ENCODE measurements at regions of chr1 and their contacts with region 1.

Region 1: DNA sequence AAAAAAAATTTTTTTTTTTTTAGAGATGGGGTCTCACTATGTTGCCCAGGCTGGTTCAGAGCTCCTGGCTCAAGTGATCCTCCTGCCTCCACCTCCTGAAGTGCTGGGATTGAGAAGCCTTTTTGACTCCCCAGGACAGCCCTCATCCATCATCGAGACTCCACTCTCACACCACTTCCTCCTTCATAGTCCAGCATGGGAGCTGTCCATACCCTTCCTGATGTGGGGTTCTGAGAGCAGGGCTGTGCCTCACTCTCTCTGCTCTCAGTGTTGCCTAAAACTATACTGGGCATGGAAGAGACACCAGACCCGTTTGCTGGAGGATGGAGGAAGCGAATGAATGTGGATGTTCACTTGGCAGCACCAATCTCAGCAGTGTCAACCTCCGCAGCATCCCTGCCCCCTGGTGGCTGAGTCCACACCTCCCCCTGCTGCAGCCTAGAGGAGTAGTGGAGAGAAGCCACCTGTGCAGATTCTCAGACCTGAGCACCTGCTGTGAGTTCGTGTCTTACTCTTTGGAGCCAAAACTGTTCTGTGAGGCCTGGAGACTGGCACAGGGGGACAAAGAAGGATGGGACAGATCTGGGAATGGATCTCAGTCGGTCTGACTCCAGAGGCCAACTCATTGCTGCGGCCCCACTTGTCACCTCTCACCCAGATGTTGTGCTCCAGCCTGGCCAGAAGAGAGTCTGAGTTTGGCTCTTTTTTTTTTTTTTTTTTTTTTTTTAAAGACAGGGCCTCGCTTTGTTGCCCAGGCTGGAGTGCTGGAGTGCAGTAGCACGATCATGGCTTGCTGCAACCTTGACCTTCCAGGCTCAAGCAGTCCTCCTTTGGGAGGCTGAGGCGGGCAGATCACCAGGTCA is 17.7 kb downstream of the TINAGL1 start:
- DNase-seq: peak; percentile 75 to 86 (median 83)
- H3K4me3 ChIP-seq: no peak overlapping the region
- H3K27ac ChIP-seq: no peak overlapping the region
- H3K4me1 ChIP-seq: peaks cover 18 to 45% (median 22%) of the 10 kb centered on the region in 4 experiments
- H3K27me3 ChIP-seq: peaks cover 0 to 6% (median 4%) of the 10 kb centered on the region in 5 experiments

Region 2: GRCh38 chr1:31564134-31564989 is 29.6 kb before region 1 on chr1:
- CTCF ChIA-PET with region 1: interaction called, 131 read pairs
- POLR2A ChIA-PET with region 1: no interaction called
- DNase-seq: peak; percentile 50 to 78 (median 66)
- H3K4me3 ChIP-seq: no peak overlapping the region
- H3K27ac ChIP-seq: no peak overlapping the region
- H3K4me1 ChIP-seq: no peaks in the 10 kb centered on the region
- H3K27me3 ChIP-seq: no peaks in the 10 kb centered on the region

Region 3: DNA sequence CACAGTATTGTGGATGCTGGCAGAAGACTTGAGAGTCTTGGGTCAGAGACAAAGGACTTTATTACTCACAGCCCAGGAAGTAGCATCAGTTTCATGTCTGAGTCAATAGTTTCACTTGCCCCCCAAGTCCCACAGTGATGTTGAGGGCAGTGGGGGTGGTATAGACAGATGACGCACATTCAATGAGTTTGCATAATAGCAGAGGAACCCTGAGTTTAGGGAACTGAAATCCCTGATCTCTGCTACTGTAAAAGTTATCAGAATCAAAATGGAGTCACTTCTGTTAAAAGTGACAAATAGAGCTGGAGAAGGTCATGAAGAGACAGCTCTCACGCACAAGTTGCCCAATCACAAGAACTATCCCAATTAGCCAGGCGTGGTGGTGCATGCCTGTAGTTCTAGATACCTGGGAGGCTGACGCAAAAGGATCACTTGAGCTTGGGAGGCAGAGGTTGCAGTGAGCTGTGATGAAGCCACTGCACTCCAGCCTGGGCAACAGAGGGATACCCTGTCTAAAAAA is 12.0 kb after region 1 on chr1:
- CTCF ChIA-PET with region 1: interaction called, 31 read pairs
- POLR2A ChIA-PET with region 1: no interaction called
- DNase-seq: peak; percentile 17 to 74 (median 65)
- H3K4me3 ChIP-seq: no peak overlapping the region
- H3K27ac ChIP-seq: no peak overlapping the region
- H3K4me1 ChIP-seq: no peaks in the 10 kb centered on the region
- H3K27me3 ChIP-seq: no peaks in the 10 kb centered on the region

Measured in common myeloid progenitor, CD34-positive (primary cell).